PC-9 (cell line): ENCODE measurements at regions of chr3 and their contacts with region 1.

Region 1: GRCh38 chr3:128879125-128879969 is at the start of gene ACAD9:
- DNase-seq: peak; percentile 89 to 99
- H3K4me3 ChIP-seq: peak within 1 kb of the TSS; percentile 82
- H3K27ac ChIP-seq: peak within 1 kb of the TSS; percentile 86
- H3K4me1 ChIP-seq: peaks cover 18% of the 10 kb centered on the region
- H3K27me3 ChIP-seq: no peaks in the 10 kb centered on the region
- CTCF ChIP-seq: no peak
- total RNA-seq, gene ACAD9: 76.5 and 81.4 TPM in 2 replicates

Region 2: DNA sequence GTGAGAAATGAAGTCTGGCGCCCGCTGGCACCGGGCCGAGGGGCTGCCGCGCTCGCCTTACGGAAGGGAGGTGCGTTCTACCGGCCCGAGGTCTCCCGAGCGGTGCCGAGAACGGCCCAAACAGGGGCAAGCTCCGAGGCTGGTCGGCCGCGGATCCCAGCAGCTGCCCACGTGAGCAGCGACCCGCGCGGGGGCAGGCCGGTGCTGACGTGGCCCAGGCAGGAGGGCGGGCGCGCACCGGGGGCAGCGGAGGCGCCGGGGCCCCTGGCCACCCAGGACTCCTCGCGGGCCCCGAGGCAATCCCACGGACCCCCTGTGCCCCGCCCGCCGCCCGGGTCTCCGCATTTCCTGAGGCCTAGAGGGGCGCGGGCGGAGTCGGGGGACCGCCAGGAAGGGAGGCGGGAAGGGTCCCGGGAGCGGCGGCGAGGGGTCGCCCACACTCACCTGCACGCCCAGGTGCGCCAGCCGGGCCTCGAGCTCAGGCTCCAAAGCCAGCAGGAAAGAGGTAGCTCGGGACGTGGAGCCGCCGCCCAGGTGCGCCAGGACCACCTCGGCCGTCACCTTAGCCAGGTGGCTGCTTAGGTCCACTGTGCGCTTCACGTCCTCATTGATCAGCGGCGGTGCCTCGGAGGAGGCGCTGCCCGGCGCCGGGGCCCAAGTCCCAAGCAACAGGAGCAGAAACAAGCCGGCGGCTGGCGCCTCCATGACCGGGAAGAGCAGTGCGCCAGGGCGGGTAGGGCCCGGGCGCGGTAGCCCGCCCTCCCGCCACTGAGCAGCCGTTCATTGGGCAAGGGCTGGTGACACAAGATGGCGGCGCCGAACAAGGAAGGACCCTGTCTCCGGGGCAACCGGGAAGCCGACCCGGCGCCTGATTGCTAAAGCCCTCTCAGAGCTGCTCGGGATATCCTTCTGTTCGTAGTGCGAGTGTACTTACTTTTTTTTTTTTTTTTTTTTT is 229.0 kb before region 1 on chr3 and contains the start of gene RPN1:
- CTCF ChIA-PET with region 1: no interaction called
- POLR2A ChIA-PET with region 1: interaction called, 6 read pairs
- intact Hi-C with region 1: loop called (anchors 1 kb)
- DNase-seq: peak; percentile 90 to 98
- H3K4me3 ChIP-seq: peak within 1 kb of the TSS; percentile 98
- H3K27ac ChIP-seq: peak within 1 kb of the TSS; percentile 92
- H3K4me1 ChIP-seq: peaks cover 9% of the 10 kb centered on the region
- H3K27me3 ChIP-seq: no peaks in the 10 kb centered on the region
- CTCF ChIP-seq: no peak
- total RNA-seq, gene RPN1: 185 and 191 TPM in 2 replicates

Region 3: GRCh38 chr3:128725932-128726690 is 153.2 kb before region 1 on chr3 and contains the start of gene RAB7A:
- CTCF ChIA-PET with region 1: no interaction called
- POLR2A ChIA-PET with region 1: interaction called, 3 read pairs
- intact Hi-C with region 1: loop called (anchors 2 kb)
- DNase-seq: peak; percentile 88 to 97
- H3K4me3 ChIP-seq: peak within 1 kb of the TSS; percentile 99
- H3K27ac ChIP-seq: peak within 1 kb of the TSS; percentile 73
- H3K4me1 ChIP-seq: peaks cover 31% of the 10 kb centered on the region
- H3K27me3 ChIP-seq: no peaks in the 10 kb centered on the region
- CTCF ChIP-seq: no peak
- total RNA-seq, gene RAB7A: 197 and 319 TPM in 2 replicates

Region 4: DNA sequence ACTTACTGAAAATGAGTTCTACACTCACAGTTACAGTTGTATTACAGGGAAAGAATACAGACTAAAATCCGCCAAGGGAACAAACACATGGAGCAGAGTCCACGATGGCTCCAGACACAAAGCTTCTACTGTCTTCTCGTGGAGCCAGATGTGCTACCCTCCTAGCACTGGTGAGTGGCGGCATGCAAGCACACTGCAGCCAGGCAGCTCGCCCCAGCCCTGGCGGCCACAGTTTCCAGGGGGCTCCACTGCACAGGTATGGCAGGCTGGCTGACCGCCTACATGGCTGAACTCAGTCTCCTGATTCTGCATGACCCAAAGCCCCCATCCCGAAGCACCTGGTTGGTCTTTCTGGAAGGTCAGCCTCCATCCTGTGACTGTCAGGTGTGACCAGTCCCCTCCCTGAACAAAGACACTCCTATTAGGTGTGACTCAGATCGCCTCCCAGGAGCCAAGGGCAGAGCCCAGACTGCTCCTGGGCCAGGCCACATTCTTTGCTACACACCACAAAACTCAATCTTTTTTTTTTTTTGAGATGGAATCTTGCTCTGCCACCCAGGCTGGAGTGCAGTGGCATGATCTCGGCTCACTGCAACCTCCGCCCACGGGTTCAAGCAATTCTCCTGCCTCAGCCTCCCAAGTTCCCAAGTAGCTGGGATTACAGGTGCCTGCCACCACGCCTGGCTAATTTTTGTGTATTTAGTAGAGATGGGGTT is 63.0 kb after region 1 on chr3:
- CTCF ChIA-PET with region 1: interaction called, 10 read pairs
- POLR2A ChIA-PET with region 1: no interaction called
- intact Hi-C with region 1: loop called (anchors 5 kb)
- DNase-seq: peak; percentile 79 to 81
- H3K4me3 ChIP-seq: no peak overlapping the region
- H3K27ac ChIP-seq: no peak overlapping the region
- H3K4me1 ChIP-seq: peaks cover 10% of the 10 kb centered on the region; the same call in 1 of the 2 replicates
- H3K27me3 ChIP-seq: no peaks in the 10 kb centered on the region
- CTCF ChIP-seq: no peak